ENCODE measurements at regions of chr20 and their contacts with region 1.

Region 1: DNA sequence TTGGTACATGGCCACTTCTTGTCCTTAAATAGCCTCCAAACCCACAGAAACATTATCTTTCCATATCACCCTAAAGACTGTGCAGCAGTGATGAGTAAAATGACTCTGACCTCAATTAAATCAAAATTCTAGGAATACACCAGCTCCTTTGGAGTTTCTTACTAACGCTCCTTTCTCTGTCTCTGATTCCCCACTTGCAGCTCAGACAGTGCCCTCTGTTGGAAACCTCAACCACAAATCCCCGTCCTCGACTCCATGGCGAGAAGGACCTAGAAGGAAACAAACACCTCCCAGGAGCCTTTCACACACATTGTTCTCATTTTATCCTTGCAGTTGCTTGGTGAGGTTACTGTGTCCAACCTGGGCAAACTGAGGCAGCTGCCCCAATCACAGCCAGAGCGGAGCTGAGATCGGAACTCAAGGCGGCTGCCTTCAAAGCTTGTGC is 17.7 kb upstream of the PARD6B start:
- DNase-seq: no peak
- H3K4me3 ChIP-seq: no peak overlapping the region
- H3K27ac ChIP-seq: no peak overlapping the region
- H3K27me3 ChIP-seq: no peaks in the 10 kb centered on the region
- CTCF ChIP-seq: peak; percentile 73

Region 2: DNA sequence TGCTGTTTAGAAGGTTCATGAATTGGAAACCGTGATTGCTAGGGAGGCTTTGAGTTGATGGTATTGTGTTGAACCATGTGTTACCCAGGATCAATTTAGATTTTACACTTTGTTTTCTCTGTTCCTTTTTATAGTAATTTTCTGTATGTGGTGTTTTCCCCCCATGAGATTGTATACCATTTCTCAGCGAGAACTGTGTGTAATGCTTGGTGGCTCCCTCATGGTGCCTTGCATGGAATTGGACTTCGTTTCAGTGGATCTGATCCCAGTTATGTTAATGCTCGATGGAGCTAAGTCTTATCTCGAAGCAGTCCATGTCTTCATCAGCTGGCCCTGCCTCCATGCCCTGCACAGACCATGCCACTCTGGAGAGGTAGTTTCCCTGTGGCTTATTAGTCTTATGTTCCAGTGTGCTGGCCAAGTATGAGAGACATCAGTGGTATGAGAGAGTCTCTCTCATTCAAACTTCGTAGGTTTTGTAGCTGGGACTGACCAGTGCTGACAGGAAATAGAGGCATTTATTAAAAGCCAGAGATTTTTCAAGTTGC is 184.8 kb before region 1 on chr20:
- CTCF ChIA-PET with region 1: no interaction called
- POLR2A ChIA-PET with region 1: no interaction called
- DNase-seq: no peak
- H3K4me3 ChIP-seq: no peak overlapping the region
- H3K27ac ChIP-seq: no peak overlapping the region
- H3K27me3 ChIP-seq: no peaks in the 10 kb centered on the region
- CTCF ChIP-seq: no peak

Region 3: GRCh38 chr20:50569864-50570836 is 143.5 kb before region 1 on chr20:
- CTCF ChIA-PET with region 1: no interaction called
- POLR2A ChIA-PET with region 1: no interaction called
- DNase-seq: no peak
- H3K4me3 ChIP-seq: no peak overlapping the region
- H3K27ac ChIP-seq: peak overlapping the region; percentile 49
- H3K27me3 ChIP-seq: no peaks in the 10 kb centered on the region
- CTCF ChIP-seq: peak; percentile 51

Region 4: DNA sequence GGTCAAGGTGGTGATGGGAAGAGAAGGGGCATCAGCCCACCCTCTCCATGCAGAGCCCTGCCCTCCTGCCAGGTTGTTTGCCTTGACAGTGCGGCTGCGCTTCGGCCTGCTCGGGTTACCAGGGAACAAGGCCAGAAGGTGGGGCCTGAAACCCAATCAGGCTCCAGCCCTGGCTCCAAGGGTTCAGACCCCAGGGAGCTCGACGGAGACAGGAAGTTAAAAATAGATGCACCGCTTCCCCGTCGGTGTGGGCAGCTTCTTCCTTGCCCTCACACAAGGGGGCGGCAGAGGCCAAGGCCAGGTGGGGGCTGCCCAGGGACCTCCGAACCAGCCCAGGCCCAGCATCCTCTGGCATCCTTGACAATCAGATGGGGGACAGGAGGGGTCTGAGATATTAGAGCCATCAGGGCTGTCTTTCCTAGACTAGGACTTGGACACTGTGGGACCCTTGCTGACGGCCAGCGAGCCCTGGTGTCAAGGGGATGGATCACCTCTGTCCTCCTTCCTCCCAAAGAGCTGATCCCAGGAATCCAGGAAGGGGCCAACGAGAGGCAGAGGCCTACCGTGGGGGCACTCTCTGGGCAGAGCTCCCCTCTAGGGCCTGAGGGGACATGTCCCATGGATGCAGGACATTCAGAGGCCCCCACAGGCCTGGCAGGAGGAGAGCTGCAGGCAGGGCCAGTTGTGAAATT is 87.5 kb before region 1 on chr20:
- CTCF ChIA-PET with region 1: interaction called, 16 read pairs
- POLR2A ChIA-PET with region 1: no interaction called
- DNase-seq: no peak
- H3K4me3 ChIP-seq: no peak overlapping the region
- H3K27ac ChIP-seq: no peak overlapping the region
- H3K27me3 ChIP-seq: no peaks in the 10 kb centered on the region
- CTCF ChIP-seq: peak; percentile 70

Region 5: GRCh38 chr20:50695135-50695872 is 18.4 kb before region 1 on chr20:
- CTCF ChIA-PET with region 1: interaction called, 12 read pairs
- POLR2A ChIA-PET with region 1: interaction called, 4 read pairs
- DNase-seq: no peak
- H3K4me3 ChIP-seq: no peak overlapping the region
- H3K27ac ChIP-seq: peak overlapping the region; percentile 54
- H3K27me3 ChIP-seq: no peaks in the 10 kb centered on the region
- CTCF ChIP-seq: no peak

Measured in AG04450 (cell line).